Mammary epithelial cell (primary cell): ENCODE measurements at regions of chr11 and their contacts with region 1.

Region 1: DNA sequence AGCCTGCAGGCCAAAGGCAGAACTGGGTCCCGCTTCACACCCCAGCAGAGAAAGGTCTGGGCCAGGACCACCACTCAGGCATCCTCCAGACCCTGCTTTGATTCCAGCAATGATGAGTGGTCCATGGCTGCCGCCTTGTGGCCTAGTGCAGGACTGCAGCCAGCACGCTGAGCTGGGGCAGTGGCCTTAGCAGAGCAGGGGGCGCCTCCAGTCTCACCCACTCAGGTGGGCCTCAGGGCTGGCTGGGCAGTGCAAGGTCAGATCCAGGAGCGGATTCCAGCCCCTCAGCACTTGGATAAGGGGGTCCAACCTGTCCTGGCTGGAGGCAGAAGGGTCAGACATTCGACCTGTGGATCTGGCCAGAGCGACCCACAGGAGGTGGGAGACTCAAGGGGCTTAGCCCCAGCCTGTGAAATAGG is 9.6 kb upstream of the PDE2A start:
- DNase-seq: no peak
- H3K4me3 ChIP-seq: no peak overlapping the region
- H3K27ac ChIP-seq: no peak overlapping the region
- H3K4me1 ChIP-seq: peaks cover 4% of the 10 kb centered on the region
- H3K27me3 ChIP-seq: no peaks in the 10 kb centered on the region
- CTCF ChIP-seq: peak; percentile 88 to 94

Region 2: GRCh38 chr11:72471005-72471898 is 212.5 kb before region 1 on chr11:
- CTCF ChIA-PET with region 1: interaction called, 4 read pairs
- dilution Hi-C with region 1: no loop called
- in situ Hi-C with region 1: loop called in 1 of 2 experiments (anchors 5 kb)
- intact Hi-C with region 1: loop called (anchors 1 kb)
- DNase-seq: peak; percentile 56
- H3K4me3 ChIP-seq: no peak overlapping the region
- H3K27ac ChIP-seq: no peak overlapping the region
- H3K4me1 ChIP-seq: no peaks in the 10 kb centered on the region
- H3K27me3 ChIP-seq: no peaks in the 10 kb centered on the region
- CTCF ChIP-seq: peak; percentile 82 to 85

Region 3: GRCh38 chr11:72585762-72586311 is 98.0 kb before region 1 on chr11:
- CTCF ChIA-PET with region 1: interaction called, 3 read pairs
- dilution Hi-C with region 1: no loop called
- in situ Hi-C with region 1: no loop called
- intact Hi-C with region 1: loop called (anchors 1 kb)
- DNase-seq: peak; percentile 53
- H3K4me3 ChIP-seq: no peak overlapping the region
- H3K27ac ChIP-seq: no peak overlapping the region
- H3K4me1 ChIP-seq: peaks cover 8% of the 10 kb centered on the region
- H3K27me3 ChIP-seq: peaks cover 10% of the 10 kb centered on the region
- CTCF ChIP-seq: peak; percentile 80 to 83

Region 4: GRCh38 chr11:72793425-72794367 is 109.9 kb after region 1 on chr11 and contains the start of gene STARD10:
- CTCF ChIA-PET with region 1: no interaction called
- dilution Hi-C with region 1: no loop called
- in situ Hi-C with region 1: no loop called
- intact Hi-C with region 1: loop called (anchors 1 kb)
- DNase-seq: peak; percentile 94
- H3K4me3 ChIP-seq: peak within 1 kb of the TSS; percentile 63 to 69 (median 68)
- H3K27ac ChIP-seq: peak within 1 kb of the TSS; percentile 60
- H3K4me1 ChIP-seq: peaks cover 25% of the 10 kb centered on the region
- H3K27me3 ChIP-seq: no peaks in the 10 kb centered on the region
- CTCF ChIP-seq: peak; percentile 61 to 92
- total RNA-seq, gene STARD10: 32.8 to 63.0 TPM